ENCODE measurements at regions of chr20 and their contacts with region 1.

Region 1: GRCh38 chr20:8722276-8722928 is 346.5 kb upstream of the PLCB4 start:
- DNase-seq: peak; percentile 10
- H3K4me3 ChIP-seq: no peak overlapping the region
- H3K27ac ChIP-seq: no peak overlapping the region
- H3K4me1 ChIP-seq: peaks cover 0 to 3% (median 0%) of the 10 kb centered on the region in 4 donors
- H3K27me3 ChIP-seq: no peaks in the 10 kb centered on the region
- CTCF ChIP-seq: peak; percentile 64 to 74 (median 70)
- EP300 ChIP-seq: no peak
- POLR2A ChIP-seq: no peak

Region 2: GRCh38 chr20:7926767-7927166 is 795.6 kb before region 1 on chr20:
- in situ Hi-C with region 1: loop called in 1 of 4 experiments (anchors 25 kb)
- intact Hi-C with region 1: no loop called
- DNase-seq: no peak
- H3K4me3 ChIP-seq: no peak overlapping the region
- H3K27ac ChIP-seq: no peak overlapping the region
- H3K4me1 ChIP-seq: no peaks in the 10 kb centered on the region
- H3K27me3 ChIP-seq: no peaks in the 10 kb centered on the region
- CTCF ChIP-seq: peak in 4 of 5 experiments; percentile 14 to 23 (median 22)
- EP300 ChIP-seq: no peak
- POLR2A ChIP-seq: no peak

Region 3: GRCh38 chr20:7937328-7937727 is 785.1 kb before region 1 on chr20:
- in situ Hi-C with region 1: loop called in 1 of 4 experiments (anchors 25 kb)
- intact Hi-C with region 1: loop called (anchors 2 kb)
- DNase-seq: no peak
- H3K4me3 ChIP-seq: no peak overlapping the region
- H3K27ac ChIP-seq: no peak overlapping the region
- H3K4me1 ChIP-seq: peaks cover 0 to 4% (median 2%) of the 10 kb centered on the region in 4 donors
- H3K27me3 ChIP-seq: no peaks in the 10 kb centered on the region
- CTCF ChIP-seq: no peak
- EP300 ChIP-seq: no peak
- POLR2A ChIP-seq: no peak

Region 4: GRCh38 chr20:8043687-8044282 is 678.6 kb before region 1 on chr20:
- in situ Hi-C with region 1: loop called (anchors 10 kb)
- intact Hi-C with region 1: no loop called
- DNase-seq: no peak
- H3K4me3 ChIP-seq: no peak overlapping the region
- H3K27ac ChIP-seq: no peak overlapping the region
- H3K4me1 ChIP-seq: no peaks in the 10 kb centered on the region
- H3K27me3 ChIP-seq: no peaks in the 10 kb centered on the region
- CTCF ChIP-seq: peak; percentile 63 to 75 (median 73)
- EP300 ChIP-seq: no peak
- POLR2A ChIP-seq: no peak

Region 5: DNA sequence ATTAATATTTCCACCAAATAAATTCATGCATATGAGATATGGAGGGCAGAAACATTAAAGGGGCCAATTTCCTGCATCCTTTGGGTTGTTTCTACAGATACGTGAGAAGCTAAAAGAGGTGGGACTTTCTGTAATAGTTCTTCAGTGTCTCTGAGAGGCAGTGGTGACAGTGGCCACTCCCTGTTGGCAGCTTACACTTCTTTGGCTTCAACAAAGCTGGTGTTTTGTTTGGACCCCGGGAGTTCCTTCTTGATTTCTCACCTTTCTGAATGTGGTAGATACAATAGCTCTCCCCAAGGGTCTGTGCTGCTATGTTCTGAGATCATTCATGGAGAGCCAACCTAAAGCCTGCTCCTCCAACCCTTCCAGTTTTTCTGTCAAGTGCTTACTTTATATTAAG is 582.5 kb before region 1 on chr20:
- in situ Hi-C with region 1: loop called in 3 of 4 experiments (anchors 5 to 25 kb)
- intact Hi-C with region 1: no loop called
- DNase-seq: no peak
- H3K4me3 ChIP-seq: no peak overlapping the region
- H3K27ac ChIP-seq: no peak overlapping the region
- H3K4me1 ChIP-seq: no peaks in the 10 kb centered on the region
- H3K27me3 ChIP-seq: no peaks in the 10 kb centered on the region
- CTCF ChIP-seq: no peak
- EP300 ChIP-seq: no peak
- POLR2A ChIP-seq: no peak

Measured in transverse colon (tissue), 4 donors.